Motor neuron (in vitro differentiated cells): ENCODE measurements at regions of chr1 and their contacts with region 1.

Region 1: DNA sequence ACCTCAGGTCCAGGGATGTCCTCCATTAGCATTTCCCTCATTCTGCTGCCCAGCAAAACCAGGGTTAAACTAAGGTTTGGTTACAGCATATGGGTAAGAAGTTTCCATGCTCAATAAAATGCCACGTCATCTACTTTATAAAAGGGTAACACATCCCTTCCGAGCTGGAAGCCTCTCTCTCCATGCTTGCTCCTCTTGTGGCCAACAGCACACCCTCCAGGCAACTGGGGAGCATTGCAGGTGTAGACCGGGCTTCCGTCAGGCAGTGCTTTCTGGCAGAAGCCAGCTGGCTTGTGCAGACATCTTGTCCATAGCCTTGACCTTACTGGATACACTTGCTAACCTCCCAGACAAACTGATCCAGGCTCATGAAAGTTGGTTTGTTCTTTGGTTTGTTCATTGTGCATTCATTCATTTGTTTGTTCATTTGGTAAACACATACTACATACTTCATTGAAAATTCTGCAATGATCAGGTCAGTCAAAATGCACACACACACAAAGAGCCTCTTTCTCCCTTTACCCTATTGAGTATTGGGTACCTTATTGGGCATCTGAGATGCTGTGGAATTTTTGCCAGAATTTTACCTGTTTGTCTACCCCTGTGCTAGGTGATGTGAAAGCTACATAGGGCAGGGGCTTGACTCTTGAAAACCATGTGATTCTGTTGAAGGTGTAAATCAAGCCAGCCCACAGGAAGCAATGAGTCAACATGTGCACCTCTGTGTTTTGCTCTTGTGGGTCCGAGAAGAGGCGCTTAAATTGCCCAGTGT is 422.8 kb downstream of the CAMTA1 start:
- ATAC-seq: peak; percentile 62 to 98 (median 86)
- H3K4me3 ChIP-seq: no peak overlapping the region
- H3K27ac ChIP-seq: no peak overlapping the region
- H3K4me1 ChIP-seq: no peaks in the 10 kb centered on the region

Region 2: DNA sequence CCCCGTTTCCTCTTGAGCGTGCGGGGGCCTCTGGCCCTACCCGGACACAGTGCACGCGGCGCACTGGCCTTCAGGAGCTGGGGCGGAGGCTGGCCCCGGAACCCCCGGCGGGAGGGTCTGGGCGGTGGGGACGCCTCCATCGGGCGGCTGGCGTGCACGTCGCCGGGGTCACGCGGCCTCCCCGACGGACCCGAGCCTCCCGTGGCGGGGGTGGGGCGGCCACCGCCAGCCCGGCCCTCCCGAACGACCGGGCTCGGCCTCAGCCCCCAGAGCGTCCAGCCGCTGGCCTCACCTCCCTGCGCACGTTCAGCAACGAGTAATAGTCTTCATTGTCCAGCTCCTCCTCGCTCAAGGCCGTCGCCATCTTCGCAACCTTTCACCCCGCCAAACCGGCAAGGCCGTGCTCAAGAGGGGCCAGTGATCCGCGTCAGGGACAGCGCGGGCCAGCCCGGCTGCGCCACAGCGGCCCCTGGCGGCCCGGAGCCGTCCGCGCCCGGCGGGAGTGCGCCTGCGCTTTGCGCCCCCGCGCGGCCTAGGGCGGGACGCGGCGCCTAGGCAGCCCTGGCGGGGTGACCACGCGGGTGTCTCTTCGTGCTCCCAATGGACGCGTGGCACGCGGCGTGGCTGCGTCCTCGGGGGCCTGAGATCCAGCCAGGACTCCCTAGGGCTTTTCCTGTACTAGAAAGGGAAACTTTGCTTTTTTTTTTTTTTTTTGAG is 506.5 kb before region 1 on chr1 and contains the start of gene DNAJC11:
- in situ Hi-C with region 1: loop called in 2 of 9 experiments (anchors 25 kb)
- ATAC-seq: peak; percentile 89 to 96 (median 94)
- H3K4me3 ChIP-seq: peak within 1 kb of the TSS; percentile 65 to 96 (median 73)
- H3K27ac ChIP-seq: peak within 1 kb of the TSS; percentile 90 to 91
- H3K4me1 ChIP-seq: peaks cover 8 to 11% of the 10 kb centered on the region in 2 donors
- total RNA-seq, gene DNAJC11: 25.9 to 87.2 (median 45.7) TPM